IMR-90 (cell line): ENCODE measurements at regions of chr15 and their contacts with region 1.

Region 1: DNA sequence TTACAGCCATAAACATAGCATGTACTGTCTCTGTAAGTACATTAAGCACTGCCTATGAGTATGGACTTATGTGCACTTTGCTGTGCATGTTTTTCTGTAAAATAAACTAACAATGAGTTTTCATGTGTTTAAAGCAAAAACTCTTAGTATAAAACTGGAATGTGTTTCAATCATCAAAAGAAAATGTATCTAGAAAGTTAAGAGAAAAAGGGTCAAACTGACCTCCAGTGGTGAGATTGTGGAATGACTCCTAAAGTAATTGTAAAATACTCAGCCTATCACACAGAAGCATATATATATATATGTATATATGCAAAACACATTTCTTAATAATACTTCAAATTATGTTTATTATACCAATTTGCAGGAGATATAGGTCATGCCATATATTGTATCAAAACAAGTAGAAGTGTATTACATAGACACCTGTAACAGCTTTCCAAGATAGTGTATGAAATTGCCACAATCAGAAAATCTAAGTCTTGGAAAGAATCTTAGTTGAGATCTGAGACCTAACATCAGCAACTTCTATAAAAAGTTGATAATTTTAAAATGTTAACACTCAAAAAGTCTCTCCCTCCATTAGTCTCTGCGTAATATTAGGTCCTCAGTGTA is 199.6 kb downstream of the FMN1 start:
- DNase-seq: peak; percentile 74
- ATAC-seq: peak; percentile 79
- H3K4me3 ChIP-seq: no peak overlapping the region
- H3K27ac ChIP-seq: peak overlapping the region; percentile 92; the same call in 1 of the 2 replicates
- H3K4me1 ChIP-seq: peaks cover 12% of the 10 kb centered on the region
- H3K27me3 ChIP-seq: no peaks in the 10 kb centered on the region
- CTCF ChIP-seq: peak; percentile 76
- POLR2A ChIP-seq: no peak
- RAD21 ChIP-seq: peak; percentile 76

Region 2: DNA sequence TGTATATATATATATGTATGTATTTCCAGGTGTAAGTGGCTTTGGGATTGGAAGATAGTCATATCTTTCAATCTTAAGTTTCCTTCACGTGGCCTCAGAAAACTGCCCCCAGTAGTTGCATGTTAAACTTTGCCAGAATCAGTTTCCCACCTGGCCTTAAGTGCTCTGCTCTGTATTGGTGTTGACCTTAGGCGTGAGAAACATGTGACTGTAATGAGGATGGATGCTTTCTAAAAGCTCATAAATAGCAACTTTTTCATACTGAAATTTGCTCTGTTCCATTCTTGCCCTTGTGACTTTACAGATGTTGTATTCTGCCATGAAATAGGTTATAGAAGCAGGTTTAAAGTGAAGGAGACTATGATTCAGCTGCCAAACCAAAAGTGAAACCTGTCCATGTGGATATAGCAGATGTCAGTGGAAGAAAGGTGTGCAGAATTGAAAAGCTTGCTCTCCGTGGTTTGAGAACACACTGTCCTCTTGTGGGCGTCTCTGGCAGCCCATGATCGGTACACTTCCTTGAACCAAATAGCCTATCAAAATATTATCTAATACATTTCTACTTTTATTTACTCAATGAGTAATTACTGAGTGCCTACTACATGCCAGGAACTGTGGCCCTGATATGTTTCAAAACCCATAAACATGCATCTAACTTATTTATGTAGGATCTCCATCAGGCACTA is 337.6 kb before region 1 on chr15:
- CTCF ChIA-PET with region 1: interaction called, 29 read pairs
- POLR2A ChIA-PET with region 1: no interaction called
- dilution Hi-C with region 1: no loop called
- in situ Hi-C with region 1: loop called (anchors 5 kb)
- intact Hi-C with region 1: loop called (anchors 1 kb)
- DNase-seq: no peak
- ATAC-seq: no peak
- H3K4me3 ChIP-seq: no peak overlapping the region
- H3K27ac ChIP-seq: no peak overlapping the region
- H3K4me1 ChIP-seq: peaks cover 3% of the 10 kb centered on the region
- H3K27me3 ChIP-seq: no peaks in the 10 kb centered on the region
- CTCF ChIP-seq: no peak
- POLR2A ChIP-seq: no peak
- RAD21 ChIP-seq: no peak

Region 3: GRCh38 chr15:32717426-32718226 is 277.3 kb before region 1 on chr15 and contains the start of gene GREM1:
- CTCF ChIA-PET with region 1: no interaction called
- POLR2A ChIA-PET with region 1: no interaction called
- dilution Hi-C with region 1: no loop called
- in situ Hi-C with region 1: no loop called
- intact Hi-C with region 1: loop called (anchors 2 kb)
- DNase-seq: peak; percentile 70
- ATAC-seq: peak; percentile 72
- H3K4me3 ChIP-seq: peak within 1 kb of the TSS; percentile 84
- H3K27ac ChIP-seq: peak within 1 kb of the TSS; percentile 94
- H3K4me1 ChIP-seq: peaks cover 5% of the 10 kb centered on the region
- H3K27me3 ChIP-seq: no peaks in the 10 kb centered on the region
- CTCF ChIP-seq: no peak
- POLR2A ChIP-seq: peak; percentile 98
- RAD21 ChIP-seq: no peak
- total RNA-seq, gene GREM1: 848 and 1,032 TPM in 2 replicates

Region 4: GRCh38 chr15:32844118-32844711 is 150.7 kb before region 1 on chr15:
- CTCF ChIA-PET with region 1: interaction called, 4 read pairs
- POLR2A ChIA-PET with region 1: no interaction called
- dilution Hi-C with region 1: no loop called
- in situ Hi-C with region 1: no loop called
- intact Hi-C with region 1: loop called (anchors 1 kb)
- DNase-seq: peak; percentile 70
- ATAC-seq: 0 out of 2 replicates have a peak, but pooled peaks have one; percentile 27
- H3K4me3 ChIP-seq: no peak overlapping the region
- H3K27ac ChIP-seq: 0 out of 2 replicates have a peak overlapping the region, but pooled peaks have one; percentile 23
- H3K4me1 ChIP-seq: peaks cover 9% of the 10 kb centered on the region
- H3K27me3 ChIP-seq: no peaks in the 10 kb centered on the region
- CTCF ChIP-seq: peak; percentile 63
- POLR2A ChIP-seq: no peak
- RAD21 ChIP-seq: peak; percentile 64